Activated CD4-positive, alpha-beta T cell treated with anti-CD3 and anti-CD28 coated beads, Interleukin-2, amount 10 ng/mL, durations not matched to agents 24 days and 14 days (primary cell): ENCODE measurements at regions of chr14 and their contacts with region 1.

Region 1: GRCh38 chr14:23320774-23321571 is at the start of gene PABPN1:
- DNase-seq: peak; percentile 99
- H3K4me3 Mint-ChIP-seq: peak within 1 kb of the TSS; percentile 90
- H3K27ac Mint-ChIP-seq: peak within 1 kb of the TSS; percentile 98
- H3K4me1 Mint-ChIP-seq: peaks cover 24% of the 10 kb centered on the region
- H3K27me3 Mint-ChIP-seq: no peaks in the 10 kb centered on the region
- total RNA-seq, gene PABPN1: 277 and 278 TPM in 2 replicates

Region 2: GRCh38 chr14:22836301-22837113 is 484.5 kb before region 1 on chr14 and contains the start of gene MMP14:
- intact Hi-C with region 1: no loop called
- DNase-seq: no peak
- H3K4me3 Mint-ChIP-seq: peak within 1 kb of the TSS; percentile 70
- H3K27ac Mint-ChIP-seq: no peak within 1 kb of the TSS
- H3K4me1 Mint-ChIP-seq: peaks cover 10% of the 10 kb centered on the region
- H3K27me3 Mint-ChIP-seq: peaks cover 19% of the 10 kb centered on the region
- total RNA-seq, gene MMP14: 2.1 and 3.2 TPM in 2 replicates

Region 3: DNA sequence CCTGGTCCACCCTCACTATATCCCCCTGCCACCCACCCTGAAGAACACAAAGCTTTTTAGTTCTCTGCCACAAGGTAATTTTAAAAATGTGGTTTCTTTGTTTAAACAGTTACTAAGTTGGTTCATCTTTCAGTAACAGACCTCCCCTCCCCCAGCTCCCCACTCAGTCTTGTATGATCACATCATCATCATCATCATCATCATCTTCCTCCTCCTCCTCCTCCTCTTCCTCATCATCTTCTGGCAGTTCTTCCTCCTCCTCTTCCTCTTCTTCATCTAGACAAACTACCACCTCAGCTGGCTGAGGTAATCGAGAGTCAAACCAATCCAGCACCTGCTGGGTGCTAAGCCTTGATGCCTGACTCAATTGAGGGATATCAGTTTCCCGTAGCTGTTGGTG is 45.6 kb before region 1 on chr14:
- intact Hi-C with region 1: no loop called
- DNase-seq: no peak
- H3K4me3 Mint-ChIP-seq: no peak overlapping the region
- H3K27ac Mint-ChIP-seq: no peak overlapping the region
- H3K4me1 Mint-ChIP-seq: peaks cover 4% of the 10 kb centered on the region
- H3K27me3 Mint-ChIP-seq: no peaks in the 10 kb centered on the region

Region 4: DNA sequence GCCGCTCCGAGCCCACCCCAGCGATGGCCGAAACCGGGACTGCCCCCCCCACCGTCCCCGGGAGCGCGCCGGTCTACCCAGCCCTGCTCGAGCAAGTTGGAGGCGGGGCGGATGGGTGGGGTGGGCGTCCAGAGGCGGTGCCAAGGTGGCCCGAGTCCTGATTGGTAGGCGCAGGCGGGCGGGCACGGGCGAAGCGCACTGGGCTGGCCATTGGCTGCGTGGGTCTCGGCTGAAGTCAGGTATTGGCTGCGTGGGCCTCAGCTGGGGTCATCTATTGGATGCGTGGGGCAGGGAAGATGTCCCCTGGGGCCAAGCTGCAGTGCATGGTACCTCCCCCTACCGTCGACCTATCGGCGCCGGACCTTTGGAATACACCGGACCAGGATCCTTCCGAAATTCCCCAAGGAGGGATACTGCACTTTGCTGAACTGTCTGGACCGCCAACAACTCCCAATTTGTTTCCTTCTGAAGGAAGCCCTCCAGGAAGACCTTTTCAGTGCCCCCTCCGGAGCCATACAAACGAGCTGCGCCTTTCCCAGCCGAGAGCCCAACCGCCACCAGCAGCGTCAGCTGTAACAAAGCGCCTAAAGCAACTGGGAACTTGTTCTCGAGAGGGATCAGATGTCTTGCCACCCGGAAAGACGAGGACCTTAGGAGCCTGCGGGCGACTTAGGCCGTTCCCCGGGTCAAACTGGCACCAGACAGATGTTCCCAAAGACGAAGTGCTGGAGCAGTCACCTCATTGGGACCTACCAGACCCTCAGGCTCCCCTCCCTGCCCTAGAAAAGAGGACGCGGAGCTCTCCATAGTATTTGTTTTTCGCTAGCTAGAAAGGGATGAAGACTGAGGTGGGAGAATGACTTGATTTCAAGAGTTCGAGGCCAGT is 34.7 kb before region 1 on chr14 and contains the start of gene HOMEZ:
- intact Hi-C with region 1: loop called (anchors 1 kb)
- DNase-seq: peak; percentile 99
- H3K4me3 Mint-ChIP-seq: peak within 1 kb of the TSS; percentile 99
- H3K27ac Mint-ChIP-seq: peak within 1 kb of the TSS; percentile 94
- H3K4me1 Mint-ChIP-seq: peaks cover 20% of the 10 kb centered on the region
- H3K27me3 Mint-ChIP-seq: no peaks in the 10 kb centered on the region
- total RNA-seq, gene HOMEZ: 12.9 and 13.5 TPM in 2 replicates

Region 5: GRCh38 chr14:23352511-23353432 is 31.8 kb after region 1 on chr14 and contains the start of gene SLC22A17:
- intact Hi-C with region 1: no loop called
- DNase-seq: peak; percentile 83
- H3K4me3 Mint-ChIP-seq: peak within 1 kb of the TSS; percentile 78
- H3K27ac Mint-ChIP-seq: no peak within 1 kb of the TSS
- H3K4me1 Mint-ChIP-seq: peaks cover 4% of the 10 kb centered on the region
- H3K27me3 Mint-ChIP-seq: peaks cover 42% of the 10 kb centered on the region
- total RNA-seq, gene SLC22A17: 2.0 and 2.3 TPM in 2 replicates

Region 6: DNA sequence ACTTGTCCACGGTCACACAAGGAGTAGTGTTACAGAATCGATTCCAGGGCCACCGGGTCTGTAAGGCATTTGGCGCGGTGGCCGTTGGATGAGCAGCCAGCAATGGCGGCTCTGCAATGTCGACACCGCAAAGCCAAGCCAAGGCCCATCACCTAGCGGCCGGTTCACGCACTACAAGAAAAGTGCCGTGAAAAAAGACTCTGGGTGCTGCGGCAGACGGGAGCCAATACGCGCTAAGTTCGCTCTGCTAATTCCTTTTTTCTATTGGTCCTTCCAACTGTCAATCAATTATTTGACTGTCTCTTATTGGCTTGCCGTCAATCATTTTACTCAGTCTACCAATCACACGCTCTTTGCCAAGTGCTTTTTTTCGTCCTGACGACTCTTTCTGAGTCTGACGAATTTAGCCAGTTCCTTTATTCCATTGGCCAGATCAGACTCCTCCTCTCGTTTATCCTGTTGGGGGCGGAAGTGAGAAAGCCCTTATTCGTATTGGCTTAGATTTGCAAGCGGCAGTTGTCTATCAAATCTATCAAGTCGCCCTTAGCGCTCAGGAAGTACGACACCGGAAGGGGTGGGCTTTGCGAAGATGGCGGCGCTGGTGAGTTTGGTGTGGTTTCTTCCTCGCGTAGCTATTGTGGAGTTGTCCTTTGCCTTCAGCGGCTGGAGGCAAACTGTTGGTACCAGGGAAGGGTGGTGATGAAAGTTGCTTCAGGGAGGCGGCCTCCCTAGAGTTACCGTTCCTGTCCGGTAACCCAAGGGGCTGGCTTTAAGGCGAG is 148.3 kb after region 1 on chr14 and contains the start of gene NGDN:
- intact Hi-C with region 1: loop called (anchors 1 kb)
- DNase-seq: peak; percentile 98
- H3K4me3 Mint-ChIP-seq: no peak within 1 kb of the TSS
- H3K27ac Mint-ChIP-seq: no peak within 1 kb of the TSS
- H3K4me1 Mint-ChIP-seq: peaks cover 9% of the 10 kb centered on the region
- H3K27me3 Mint-ChIP-seq: no peaks in the 10 kb centered on the region
- total RNA-seq, gene NGDN: 78.6 and 79.2 TPM in 2 replicates